Activated CD8-positive, alpha-beta T cell treated with anti-CD3 and anti-CD28 coated beads for 36 hours (primary cell): ENCODE measurements at regions of chr2 and their contacts with region 1.

Region 1: DNA sequence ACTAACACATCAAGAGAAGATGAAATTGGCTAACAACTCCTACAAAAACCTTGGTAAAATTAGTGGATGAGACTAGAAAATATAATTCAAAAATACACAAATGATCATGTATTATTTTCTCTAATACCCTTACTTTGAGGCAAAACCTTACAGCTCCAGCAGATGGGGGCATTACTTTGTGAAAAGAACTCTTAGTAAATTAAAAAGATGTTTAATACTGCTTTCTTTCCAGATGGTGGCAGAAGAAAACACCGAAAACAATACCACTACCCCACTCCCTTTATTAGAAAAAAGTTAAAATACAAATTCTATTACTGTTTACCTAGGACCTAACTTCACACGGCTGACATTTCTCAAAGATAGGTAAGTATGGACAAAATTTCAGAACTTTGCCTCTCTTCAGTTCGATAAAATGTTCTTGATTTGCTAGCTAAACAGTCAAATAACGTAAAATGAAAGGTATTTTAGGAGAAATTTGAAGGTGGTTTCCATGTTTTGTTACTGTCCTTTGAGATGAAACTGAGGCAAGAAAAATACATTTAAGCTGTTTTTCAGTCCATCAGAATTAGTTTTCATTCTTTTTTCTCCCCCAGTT is 30.6 kb downstream of the ORC4 start:
- DNase-seq: peak; percentile 47
- ATAC-seq: peak; percentile 64
- H3K4me3 Mint-ChIP-seq: no peak overlapping the region
- H3K27ac Mint-ChIP-seq: no peak overlapping the region
- H3K4me1 Mint-ChIP-seq: peaks cover 14% of the 10 kb centered on the region
- H3K27me3 Mint-ChIP-seq: no peaks in the 10 kb centered on the region
- CTCF ChIP-seq: peak; percentile 89

Region 2: GRCh38 chr2:147649286-147649685 is 340.6 kb before region 1 on chr2:
- CTCF ChIA-PET with region 1: no interaction called
- POLR2A ChIA-PET with region 1: no interaction called
- intact Hi-C with region 1: no loop called
- DNase-seq: no peak
- ATAC-seq: no peak
- H3K4me3 Mint-ChIP-seq: no peak overlapping the region
- H3K27ac Mint-ChIP-seq: no peak overlapping the region
- H3K4me1 Mint-ChIP-seq: no peaks in the 10 kb centered on the region
- H3K27me3 Mint-ChIP-seq: no peaks in the 10 kb centered on the region
- CTCF ChIP-seq: no peak

Region 3: DNA sequence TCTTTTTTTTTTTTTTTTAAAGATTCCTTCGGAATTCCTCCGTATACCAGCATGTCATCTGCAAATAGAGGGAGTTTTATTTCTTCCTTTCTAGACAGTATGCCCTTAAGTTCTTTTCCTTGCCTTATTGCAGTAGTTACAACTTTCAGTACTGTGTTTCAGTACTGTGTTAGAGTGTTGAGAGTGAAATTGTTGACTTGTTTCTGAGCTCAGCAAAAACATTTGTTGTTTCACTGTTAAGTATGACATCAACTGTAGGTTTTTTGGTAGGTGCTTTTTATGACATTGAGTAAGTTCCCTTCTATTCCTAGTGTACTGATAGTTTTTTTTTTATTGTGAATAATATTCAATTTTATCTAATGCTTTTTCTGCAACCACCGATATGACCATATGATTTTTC is 101.2 kb before region 1 on chr2:
- CTCF ChIA-PET with region 1: no interaction called
- POLR2A ChIA-PET with region 1: no interaction called
- intact Hi-C with region 1: no loop called
- DNase-seq: no peak
- ATAC-seq: no peak
- H3K4me3 Mint-ChIP-seq: no peak overlapping the region
- H3K27ac Mint-ChIP-seq: no peak overlapping the region
- H3K4me1 Mint-ChIP-seq: peaks cover 15% of the 10 kb centered on the region
- H3K27me3 Mint-ChIP-seq: no peaks in the 10 kb centered on the region
- CTCF ChIP-seq: no peak

Region 4: GRCh38 chr2:147977679-147978078 is 12.2 kb before region 1 on chr2:
- CTCF ChIA-PET with region 1: interaction called, 10 read pairs
- POLR2A ChIA-PET with region 1: no interaction called
- intact Hi-C with region 1: no loop called
- DNase-seq: no peak
- ATAC-seq: no peak
- H3K4me3 Mint-ChIP-seq: no peak overlapping the region
- H3K27ac Mint-ChIP-seq: no peak overlapping the region
- H3K4me1 Mint-ChIP-seq: peaks cover 16% of the 10 kb centered on the region
- H3K27me3 Mint-ChIP-seq: no peaks in the 10 kb centered on the region
- CTCF ChIP-seq: no peak

Region 5: DNA sequence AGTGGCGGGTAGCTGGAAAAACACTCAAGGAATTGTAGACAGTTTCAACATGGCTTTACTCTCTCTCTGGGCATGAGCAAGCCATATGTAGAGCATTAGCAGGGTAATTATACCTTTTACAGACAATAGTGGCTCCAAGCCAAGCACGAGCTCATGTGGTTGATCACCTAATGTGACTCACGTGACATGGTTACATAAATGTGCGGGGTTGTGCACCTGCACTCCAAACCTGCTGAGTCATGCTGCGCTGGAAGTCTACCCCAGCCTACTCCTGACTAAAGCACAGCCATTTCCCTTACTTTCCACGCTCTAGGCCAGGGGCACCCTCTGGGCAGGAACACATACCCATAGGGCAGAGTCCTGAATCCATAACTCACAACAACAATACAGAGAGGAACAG is 263.8 kb after region 1 on chr2:
- CTCF ChIA-PET with region 1: no interaction called
- POLR2A ChIA-PET with region 1: no interaction called
- intact Hi-C with region 1: no loop called
- DNase-seq: no peak
- ATAC-seq: no peak
- H3K4me3 Mint-ChIP-seq: no peak overlapping the region
- H3K27ac Mint-ChIP-seq: no peak overlapping the region
- H3K4me1 Mint-ChIP-seq: no peaks in the 10 kb centered on the region
- H3K27me3 Mint-ChIP-seq: no peaks in the 10 kb centered on the region
- CTCF ChIP-seq: no peak